Activated CD4-positive, alpha-beta memory T cell treated with anti-CD3 and anti-CD28 coated beads for 36 hours (primary cell): ENCODE measurements at regions of chr15 and their contacts with region 1.

Region 1: DNA sequence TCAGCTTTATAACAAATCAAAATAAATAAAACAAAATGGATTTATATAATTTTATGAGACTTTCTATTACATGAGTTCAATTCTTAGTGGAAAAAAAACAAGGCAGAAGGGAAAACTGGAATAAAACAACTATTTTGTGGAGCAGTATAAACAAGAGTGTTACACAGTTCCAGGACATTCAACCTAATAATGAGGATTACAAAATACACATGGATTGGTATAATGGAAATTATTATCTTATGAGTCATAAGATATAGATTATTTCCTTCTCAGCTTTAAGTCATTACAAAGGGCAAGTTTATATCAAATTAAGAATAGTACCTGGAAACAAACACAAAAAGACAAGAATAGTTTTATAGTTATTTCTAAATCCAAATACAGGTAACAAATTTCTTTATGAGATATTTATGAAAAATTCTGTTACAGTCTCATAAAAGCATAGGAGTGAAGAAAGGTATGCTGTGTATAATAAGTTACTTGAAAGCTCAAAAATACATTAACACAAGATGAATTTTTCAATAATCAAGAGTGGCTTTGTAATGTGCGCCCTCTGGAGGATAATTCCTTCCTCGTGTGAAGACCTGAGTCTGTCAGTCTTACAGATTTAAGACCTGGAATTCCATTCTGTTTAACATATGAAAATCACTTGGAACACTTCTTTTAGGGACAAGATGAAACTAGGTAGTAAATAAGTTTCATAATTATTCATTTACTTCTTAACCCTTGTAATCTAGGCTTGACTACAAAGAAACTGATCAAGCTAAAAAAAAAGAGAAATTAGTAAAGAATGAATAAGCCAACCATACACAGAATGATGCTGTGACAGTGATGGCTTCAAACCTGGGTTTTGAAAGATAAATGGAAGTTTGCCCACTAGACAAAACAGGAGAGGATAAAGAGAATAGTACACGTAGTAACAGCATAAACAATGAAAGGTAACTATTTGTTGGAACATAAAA is 9.5 kb downstream of the COPS2 start:
- DNase-seq: peak; percentile 22
- H3K4me3 Mint-ChIP-seq: no peak overlapping the region
- H3K27ac Mint-ChIP-seq: no peak overlapping the region
- H3K4me1 Mint-ChIP-seq: peaks cover 41% of the 10 kb centered on the region
- H3K27me3 Mint-ChIP-seq: no peaks in the 10 kb centered on the region

Region 2: GRCh38 chr15:48975472-48976419 is 170.2 kb before region 1 on chr15:
- CTCF ChIA-PET with region 1: interaction called, 12 read pairs
- POLR2A ChIA-PET with region 1: no interaction called
- intact Hi-C with region 1: no loop called
- DNase-seq: peak; percentile 83
- H3K4me3 Mint-ChIP-seq: peak overlapping the region; percentile 39
- H3K27ac Mint-ChIP-seq: no peak overlapping the region
- H3K4me1 Mint-ChIP-seq: no peaks in the 10 kb centered on the region
- H3K27me3 Mint-ChIP-seq: peaks cover 19% of the 10 kb centered on the region

Region 3: GRCh38 chr15:49135893-49136292 is 10.0 kb before region 1 on chr15:
- CTCF ChIA-PET with region 1: interaction called, 14 read pairs
- POLR2A ChIA-PET with region 1: no interaction called
- intact Hi-C with region 1: no loop called
- DNase-seq: no peak
- H3K4me3 Mint-ChIP-seq: no peak overlapping the region
- H3K27ac Mint-ChIP-seq: no peak overlapping the region
- H3K4me1 Mint-ChIP-seq: peaks cover 25% of the 10 kb centered on the region
- H3K27me3 Mint-ChIP-seq: no peaks in the 10 kb centered on the region